Activated CD8-positive, alpha-beta T cell treated with anti-CD3 and anti-CD28 coated beads, Interleukin-2, amount 10 ng/mL, durations not matched to agents 7 days and 5 days (primary cell): ENCODE measurements at regions of chr10 and their contacts with region 1.

Region 1: GRCh38 chr10:75159519-75159918 is 48.1 kb downstream of the SAMD8 start:
- DNase-seq: no peak
- ATAC-seq: no peak
- H3K4me3 Mint-ChIP-seq: no peak overlapping the region
- H3K27ac Mint-ChIP-seq: peak overlapping the region; percentile 5
- H3K4me1 Mint-ChIP-seq: peaks cover 31% of the 10 kb centered on the region
- H3K27me3 Mint-ChIP-seq: no peaks in the 10 kb centered on the region

Region 2: DNA sequence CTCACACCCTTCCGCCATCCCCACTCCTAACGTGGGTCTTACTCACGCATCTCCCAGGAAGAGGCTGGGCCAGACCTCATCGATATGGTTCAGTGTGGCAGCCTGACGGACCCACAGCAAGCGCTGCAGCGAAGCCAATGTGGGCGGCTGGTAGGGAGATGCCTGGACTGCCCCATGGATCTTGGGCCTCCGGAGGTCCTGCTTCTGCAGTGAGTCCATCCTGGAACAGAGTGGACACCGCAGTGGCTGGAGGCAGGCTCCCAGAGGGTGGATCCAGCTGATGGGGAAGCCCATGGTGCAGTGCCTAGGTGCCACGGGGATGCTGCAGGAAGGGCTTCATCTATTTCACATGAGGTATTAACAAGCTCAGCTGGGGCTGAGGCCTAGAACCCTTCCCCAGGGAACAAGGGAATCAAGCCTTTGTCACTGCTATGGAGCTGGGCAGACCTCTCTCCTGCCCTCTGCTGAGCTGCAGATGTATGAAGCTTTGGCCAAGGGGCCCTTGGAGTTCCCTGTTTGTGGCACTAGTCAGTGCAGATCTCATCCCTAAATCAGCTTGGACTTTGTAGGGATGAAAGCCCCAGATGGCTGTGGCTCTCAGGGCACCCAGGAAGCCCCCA is 61.7 kb before region 1 on chr10:
- CTCF ChIA-PET with region 1: no interaction called
- POLR2A ChIA-PET with region 1: no interaction called
- DNase-seq: no peak
- ATAC-seq: no peak
- H3K4me3 Mint-ChIP-seq: no peak overlapping the region
- H3K27ac Mint-ChIP-seq: no peak overlapping the region
- H3K4me1 Mint-ChIP-seq: peaks cover 6% of the 10 kb centered on the region
- H3K27me3 Mint-ChIP-seq: no peaks in the 10 kb centered on the region

Region 3: GRCh38 chr10:75145590-75145989 is 13.9 kb before region 1 on chr10:
- CTCF ChIA-PET with region 1: interaction called, 10 read pairs
- POLR2A ChIA-PET with region 1: no interaction called
- DNase-seq: peak; percentile 51
- ATAC-seq: peak; percentile 76
- H3K4me3 Mint-ChIP-seq: peak overlapping the region; percentile 17
- H3K27ac Mint-ChIP-seq: peak overlapping the region; percentile 76
- H3K4me1 Mint-ChIP-seq: peaks cover 34% of the 10 kb centered on the region
- H3K27me3 Mint-ChIP-seq: no peaks in the 10 kb centered on the region